Ascending aorta (tissue), 2 donors: ENCODE measurements at regions of chr19 and their contacts with region 1.

Region 1: GRCh38 chr19:55624109-55625003 is at the start of gene ZNF784:
- DNase-seq: peak; percentile 67 to 95
- H3K4me3 ChIP-seq: peak within 1 kb of the TSS; percentile 60 to 73
- H3K27ac ChIP-seq: peak within 1 kb of the TSS; percentile 96 to 97
- H3K4me1 ChIP-seq: peaks cover 0 to 5% of the 10 kb centered on the region in 2 donors
- H3K27me3 ChIP-seq: no peaks in the 10 kb centered on the region
- CTCF ChIP-seq: no peak
- total RNA-seq, gene ZNF784: 14.7 TPM

Region 2: DNA sequence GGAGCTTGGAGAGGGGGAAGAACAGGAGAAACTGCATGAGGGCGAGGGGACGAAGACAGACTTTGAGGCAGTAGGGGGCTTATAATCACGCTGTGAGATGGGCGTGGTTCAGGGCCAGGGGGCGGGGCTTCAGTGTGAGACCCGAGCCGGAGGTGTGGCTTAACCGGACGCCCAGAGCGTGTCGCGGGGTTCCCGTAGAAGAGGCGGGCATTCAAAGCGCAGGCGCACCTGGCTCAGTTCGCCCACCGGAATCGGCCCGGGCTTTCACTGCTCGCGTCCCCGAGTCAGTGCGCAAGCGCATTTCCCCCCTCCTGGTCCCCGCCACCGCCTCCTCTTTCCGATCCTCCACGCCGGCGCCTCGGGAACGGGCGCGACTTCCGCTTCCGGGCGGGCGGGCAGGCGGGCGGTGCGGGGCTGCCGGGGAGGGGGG is 19.1 kb before region 1 on chr19:
- intact Hi-C with region 1: loop called (anchors 1 kb)
- DNase-seq: peak; percentile 89 to 98
- H3K4me3 ChIP-seq: peak overlapping the region; percentile 91 to 93
- H3K27ac ChIP-seq: peak overlapping the region; percentile 92 to 98
- H3K4me1 ChIP-seq: peaks cover 3 to 13% of the 10 kb centered on the region in 2 donors
- H3K27me3 ChIP-seq: no peaks in the 10 kb centered on the region
- CTCF ChIP-seq: no peak